Activated naive CD4-positive, alpha-beta T cell treated with anti-CD3 and anti-CD28 coated beads for 36 hours (primary cell): ENCODE measurements at regions of chr7 and their contacts with region 1.

Region 1: DNA sequence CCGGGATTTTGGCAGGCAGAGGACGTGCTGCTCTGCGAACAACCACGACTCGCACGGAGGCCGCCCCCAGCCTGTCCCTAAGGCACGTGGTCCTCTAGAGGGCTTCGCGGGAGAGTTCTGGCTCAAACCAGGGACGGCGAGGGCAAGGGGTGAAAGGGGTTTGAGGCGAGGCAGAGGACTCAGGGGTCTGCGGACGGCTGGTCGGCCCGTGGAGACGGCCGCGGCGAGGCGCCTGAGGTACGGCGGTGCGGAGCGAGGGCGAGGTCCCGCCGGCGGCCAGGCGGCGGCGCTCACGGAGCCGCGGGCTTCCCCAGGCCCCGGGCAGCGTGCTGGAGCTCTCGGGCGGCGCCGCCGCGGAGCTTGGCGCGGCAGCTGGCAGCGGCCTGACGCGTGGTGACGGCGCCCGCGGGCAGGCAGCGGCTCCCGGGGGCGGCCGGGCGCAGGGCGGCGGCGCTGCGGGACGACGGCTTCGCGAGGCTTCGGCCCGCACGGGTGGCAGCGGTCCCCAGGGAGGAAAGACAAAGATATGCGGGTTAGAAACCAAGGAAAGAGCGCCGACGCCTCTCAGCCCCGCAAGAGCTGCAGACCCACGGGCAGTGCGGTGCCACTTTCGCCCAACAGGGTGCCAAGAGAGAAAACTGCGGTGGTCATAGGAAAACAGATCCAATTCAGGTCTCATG is 44.8 kb downstream of the ZNF800 start:
- DNase-seq: peak; percentile 77
- H3K4me3 Mint-ChIP-seq: peak overlapping the region; percentile 36
- H3K27ac Mint-ChIP-seq: no peak overlapping the region
- H3K4me1 Mint-ChIP-seq: peaks cover 21% of the 10 kb centered on the region
- H3K27me3 Mint-ChIP-seq: no peaks in the 10 kb centered on the region

Region 2: DNA sequence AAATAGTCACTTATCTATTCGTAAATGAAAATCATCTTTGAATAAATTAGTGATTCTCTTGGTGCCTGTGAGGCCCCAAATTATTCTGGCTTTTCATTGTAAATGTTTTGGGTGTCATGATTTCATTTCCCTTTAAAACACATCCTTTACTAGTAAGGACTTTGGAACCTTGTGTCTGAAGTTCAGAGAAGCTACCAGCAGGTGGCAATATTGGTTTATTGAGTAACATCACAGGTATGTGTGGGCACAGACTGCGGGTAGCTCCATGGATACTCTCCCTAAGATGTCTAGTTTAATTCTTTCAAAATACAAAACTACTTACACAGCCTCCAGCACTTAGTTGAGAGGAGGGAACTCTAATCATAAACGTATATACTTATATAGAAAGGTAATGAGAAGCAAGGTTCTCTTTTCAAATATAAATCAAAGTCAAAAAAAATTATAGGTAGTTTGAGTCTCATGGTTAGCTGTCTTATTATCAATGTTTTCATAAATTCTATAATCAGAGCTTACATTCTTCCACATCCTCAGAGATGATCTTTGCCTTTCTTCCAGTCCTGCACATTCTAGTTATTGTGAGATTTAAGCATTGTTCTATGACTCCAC is 544.5 kb before region 1 on chr7:
- CTCF ChIA-PET with region 1: no interaction called
- intact Hi-C with region 1: loop called (anchors 5 kb)
- DNase-seq: peak; percentile 51
- H3K4me3 Mint-ChIP-seq: no peak overlapping the region
- H3K27ac Mint-ChIP-seq: no peak overlapping the region
- H3K4me1 Mint-ChIP-seq: no peaks in the 10 kb centered on the region
- H3K27me3 Mint-ChIP-seq: peaks cover 3% of the 10 kb centered on the region

Region 3: GRCh38 chr7:127375631-127376030 is 27.9 kb after region 1 on chr7:
- CTCF ChIA-PET with region 1: interaction called, 3 read pairs
- intact Hi-C with region 1: loop called (anchors 1 kb)
- DNase-seq: no peak
- H3K4me3 Mint-ChIP-seq: no peak overlapping the region
- H3K27ac Mint-ChIP-seq: no peak overlapping the region
- H3K4me1 Mint-ChIP-seq: peaks cover 53% of the 10 kb centered on the region
- H3K27me3 Mint-ChIP-seq: no peaks in the 10 kb centered on the region

Region 4: GRCh38 chr7:127404286-127405072 is 56.8 kb after region 1 on chr7:
- CTCF ChIA-PET with region 1: interaction called, 5 read pairs
- intact Hi-C with region 1: loop called (anchors 1 kb)
- DNase-seq: no peak
- H3K4me3 Mint-ChIP-seq: peak overlapping the region; percentile 30
- H3K27ac Mint-ChIP-seq: peak overlapping the region; percentile 65
- H3K4me1 Mint-ChIP-seq: peaks cover 23% of the 10 kb centered on the region
- H3K27me3 Mint-ChIP-seq: no peaks in the 10 kb centered on the region

Region 5: DNA sequence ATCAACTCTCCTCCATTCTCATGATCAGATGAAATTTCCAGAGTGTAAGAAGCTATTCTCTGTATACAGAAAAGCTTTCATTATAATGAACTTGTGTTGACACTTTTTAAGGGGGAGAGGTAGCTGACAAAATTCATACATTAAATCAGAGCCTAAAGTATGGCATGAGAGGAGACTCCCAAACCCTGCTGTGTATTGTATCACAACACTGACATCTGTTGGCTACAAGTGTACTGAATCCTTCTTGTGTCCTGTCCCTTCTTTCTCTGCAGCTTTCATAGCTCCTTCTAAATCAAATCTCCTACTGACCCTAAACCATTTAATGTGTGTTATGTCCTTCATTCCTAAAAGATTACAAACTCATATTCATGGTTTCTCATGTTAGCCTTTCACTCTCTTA is 166.8 kb after region 1 on chr7:
- CTCF ChIA-PET with region 1: interaction called, 4 read pairs
- intact Hi-C with region 1: loop called (anchors 1 kb)
- DNase-seq: no peak
- H3K4me3 Mint-ChIP-seq: no peak overlapping the region
- H3K27ac Mint-ChIP-seq: no peak overlapping the region
- H3K4me1 Mint-ChIP-seq: no peaks in the 10 kb centered on the region
- H3K27me3 Mint-ChIP-seq: peaks cover 5% of the 10 kb centered on the region

Region 6: DNA sequence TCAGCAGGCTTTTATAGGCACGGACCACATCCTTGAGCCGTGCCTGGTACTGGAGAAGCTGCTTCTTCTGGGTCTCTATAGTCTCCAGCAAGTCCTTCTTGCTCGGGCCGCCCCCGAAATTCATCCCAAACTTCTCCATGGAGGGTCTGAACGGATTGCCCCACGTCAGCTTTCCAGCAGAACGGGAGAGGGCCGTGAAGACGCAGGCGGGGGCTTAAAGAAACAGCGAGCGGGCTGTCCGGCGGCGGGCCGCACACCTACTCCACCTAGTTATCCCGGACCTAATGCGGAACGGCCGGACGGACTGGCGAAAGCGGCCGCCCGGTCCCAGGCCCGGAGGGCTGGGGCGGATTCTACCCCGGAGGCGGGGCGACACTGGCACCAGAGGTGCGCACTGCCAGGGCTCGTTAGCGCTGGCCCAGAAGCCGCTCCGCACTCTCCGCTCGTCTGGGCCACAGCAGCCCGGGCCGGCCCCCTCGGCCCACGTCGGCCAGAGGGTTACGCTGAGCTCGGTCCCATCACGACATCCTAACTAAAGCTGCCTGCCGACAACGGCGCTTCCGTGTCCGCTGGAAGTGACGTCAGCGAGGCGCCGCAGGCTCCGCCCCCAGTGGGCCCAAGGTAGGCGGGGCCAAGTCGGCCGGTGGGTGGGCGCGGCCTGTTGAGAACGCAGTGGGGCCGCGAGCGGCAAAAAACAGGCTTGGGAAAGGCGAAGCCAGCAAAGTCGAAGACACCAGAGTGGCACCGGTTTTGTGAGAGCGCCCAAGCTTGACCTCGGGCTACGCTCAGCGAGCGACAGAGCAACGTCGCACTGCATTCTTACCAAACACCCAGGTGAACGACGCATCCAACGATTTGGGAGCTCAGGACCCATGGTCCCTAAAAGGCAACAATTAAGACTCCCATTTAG is 237.6 kb after region 1 on chr7 and contains the start of gene GCC1:
- CTCF ChIA-PET with region 1: interaction called, 3 read pairs
- intact Hi-C with region 1: loop called (anchors 2 kb)
- DNase-seq: peak; percentile 94
- H3K4me3 Mint-ChIP-seq: peak within 1 kb of the TSS; percentile 89
- H3K27ac Mint-ChIP-seq: peak within 1 kb of the TSS; percentile 70
- H3K4me1 Mint-ChIP-seq: peaks cover 66% of the 10 kb centered on the region
- H3K27me3 Mint-ChIP-seq: no peaks in the 10 kb centered on the region
- total RNA-seq, gene GCC1: 11.0 to 12.0 TPM